ENCODE measurements at regions of chr16 and their contacts with region 1.

Region 1: GRCh38 chr16:67561824-67562525 is 351 bp upstream of the CTCF start:
- DNase-seq: peak; percentile 99
- ATAC-seq: peak; percentile 87
- H3K4me3 Mint-ChIP-seq: peak overlapping the region; percentile 84
- H3K27ac Mint-ChIP-seq: peak overlapping the region; percentile 85
- H3K4me1 Mint-ChIP-seq: peaks cover 41% of the 10 kb centered on the region
- H3K27me3 Mint-ChIP-seq: no peaks in the 10 kb centered on the region

Region 2: DNA sequence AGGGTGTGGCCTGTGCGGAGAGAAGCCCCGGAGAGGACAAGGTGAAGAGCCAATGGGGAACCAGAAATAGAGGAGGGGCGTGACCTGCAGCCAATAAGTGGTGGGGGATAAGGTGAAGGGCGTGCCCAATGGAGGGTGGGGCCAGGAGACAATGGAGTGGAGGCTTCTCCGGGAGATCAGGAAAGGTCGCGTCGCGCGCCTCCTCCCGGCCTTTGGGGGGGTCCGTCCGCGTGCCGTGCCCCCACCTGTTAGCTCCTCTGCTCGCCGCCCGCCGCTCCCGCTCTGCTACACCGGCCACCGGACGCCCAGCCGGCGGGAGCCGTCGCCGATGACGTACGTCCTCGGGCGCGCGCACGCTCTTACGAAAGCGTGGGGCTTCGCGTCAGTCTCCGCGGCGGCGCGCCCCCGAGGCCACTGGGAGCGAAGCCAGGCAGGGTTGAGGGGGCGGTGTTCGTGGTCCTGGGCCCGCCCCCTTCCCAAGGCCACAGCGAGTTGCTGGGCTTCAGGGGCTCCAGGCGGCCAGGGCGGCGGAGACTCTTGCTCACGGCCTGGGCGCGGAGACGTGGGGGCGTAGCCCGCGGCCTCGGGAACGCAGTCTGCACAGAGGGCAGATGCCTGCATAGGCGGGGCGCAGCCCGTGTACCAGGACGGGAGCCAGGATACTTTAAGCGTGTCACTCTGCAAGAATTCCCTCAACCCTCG is 378.2 kb before region 1 on chr16 and contains the start of gene MATCAP1:
- CTCF ChIA-PET with region 1: no interaction called
- POLR2A ChIA-PET with region 1: no interaction called
- intact Hi-C with region 1: loop called in 1 of 2 experiments (anchors 2 kb)
- DNase-seq: peak; percentile 96
- ATAC-seq: peak; percentile 97
- H3K4me3 Mint-ChIP-seq: no peak within 1 kb of the TSS
- H3K27ac Mint-ChIP-seq: no peak within 1 kb of the TSS
- H3K4me1 Mint-ChIP-seq: peaks cover 15% of the 10 kb centered on the region
- H3K27me3 Mint-ChIP-seq: peaks cover 9% of the 10 kb centered on the region
- total RNA-seq, gene MATCAP1: 28.8 to 30.4 TPM

Region 3: DNA sequence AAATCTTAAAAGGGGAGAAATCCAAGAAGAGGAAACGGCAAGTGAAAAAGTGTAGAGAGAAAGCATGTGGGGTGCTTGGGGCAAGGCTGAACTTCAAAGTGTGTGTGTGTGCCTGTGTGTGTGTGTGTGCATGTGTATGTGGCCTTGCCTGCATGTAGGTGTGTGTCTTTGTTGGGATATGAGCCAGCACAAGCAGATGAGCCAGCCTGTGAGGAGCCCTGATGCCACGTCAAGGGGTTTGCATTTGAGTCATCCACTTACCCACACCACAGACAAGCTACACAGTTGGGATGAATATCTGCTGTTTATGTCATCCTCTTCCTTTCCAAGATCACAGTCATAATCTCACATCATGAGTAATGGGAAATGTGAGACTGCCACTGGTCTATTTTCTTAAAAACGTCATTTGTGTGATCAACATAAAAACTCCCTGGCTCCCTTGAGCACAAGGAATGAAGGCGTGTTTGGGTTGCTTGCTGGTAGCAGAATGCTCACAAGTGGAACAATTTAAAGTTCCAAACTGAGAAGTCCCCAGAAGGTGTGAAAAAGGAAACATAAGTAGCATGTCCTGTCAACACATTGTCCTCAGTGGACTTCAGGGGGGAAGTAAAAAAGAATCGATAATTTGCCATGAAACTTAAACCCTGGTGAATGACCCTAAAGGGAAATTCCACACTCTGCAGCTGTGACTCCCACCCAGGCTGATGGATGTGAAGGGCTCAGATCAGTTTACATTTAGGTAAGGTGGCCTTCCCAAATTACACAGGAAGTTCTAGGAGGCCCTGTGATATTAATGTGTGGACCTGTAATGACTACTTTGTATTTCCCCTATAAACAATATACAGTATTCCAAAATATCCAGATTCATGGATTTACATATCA is 250.1 kb before region 1 on chr16:
- CTCF ChIA-PET with region 1: no interaction called
- POLR2A ChIA-PET with region 1: no interaction called
- intact Hi-C with region 1: loop called in 1 of 2 experiments (anchors 1 kb)
- DNase-seq: peak; percentile 94
- ATAC-seq: peak; percentile 98
- H3K4me3 Mint-ChIP-seq: peak overlapping the region; percentile 1
- H3K27ac Mint-ChIP-seq: peak overlapping the region; percentile 98
- H3K4me1 Mint-ChIP-seq: peaks cover 40% of the 10 kb centered on the region
- H3K27me3 Mint-ChIP-seq: peaks cover 1% of the 10 kb centered on the region

Region 4: GRCh38 chr16:67456391-67457081 is 105.4 kb before region 1 on chr16:
- CTCF ChIA-PET with region 1: no interaction called
- POLR2A ChIA-PET with region 1: no interaction called
- intact Hi-C with region 1: no loop called
- DNase-seq: peak; percentile 17
- ATAC-seq: no peak
- H3K4me3 Mint-ChIP-seq: no peak overlapping the region
- H3K27ac Mint-ChIP-seq: no peak overlapping the region
- H3K4me1 Mint-ChIP-seq: peaks cover 8% of the 10 kb centered on the region
- H3K27me3 Mint-ChIP-seq: no peaks in the 10 kb centered on the region

Region 5: DNA sequence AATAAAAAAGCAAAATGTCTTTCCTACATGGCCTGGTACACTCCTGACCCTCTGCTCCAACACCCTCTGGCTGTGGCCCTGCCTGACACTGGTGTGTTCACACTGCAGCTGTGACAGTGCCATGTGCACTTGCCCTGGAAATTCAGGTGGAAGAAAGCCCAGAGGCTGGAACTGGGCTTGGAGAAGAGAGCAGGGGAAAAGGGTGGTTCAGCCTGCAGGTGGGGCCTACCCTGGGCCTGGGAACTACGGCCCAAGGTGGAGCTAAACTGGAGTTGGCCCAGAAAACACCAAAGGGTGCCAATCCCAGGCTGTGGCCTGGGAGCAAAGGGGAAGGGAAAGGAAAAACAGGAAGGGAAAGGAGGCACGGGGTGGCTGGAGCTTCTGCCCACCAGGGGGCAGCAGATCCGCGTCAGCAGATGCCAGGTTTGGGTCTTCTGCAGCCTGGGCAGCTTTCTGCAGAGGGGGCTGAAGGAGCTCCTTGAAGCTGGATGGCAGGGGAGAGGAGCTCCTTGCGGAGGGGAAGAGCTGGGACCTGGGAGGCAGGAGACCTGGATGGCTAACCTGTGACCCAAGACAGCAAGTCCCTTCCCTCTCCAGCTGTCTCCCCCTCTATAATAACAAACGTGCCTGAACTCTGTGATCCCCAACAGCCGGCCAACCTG is 15.1 kb before region 1 on chr16:
- CTCF ChIA-PET with region 1: interaction called, 83 read pairs
- POLR2A ChIA-PET with region 1: interaction called, 17 read pairs
- intact Hi-C with region 1: loop called (anchors 1 to 2 kb)
- DNase-seq: peak; percentile 86
- ATAC-seq: peak; percentile 63
- H3K4me3 Mint-ChIP-seq: no peak overlapping the region
- H3K27ac Mint-ChIP-seq: peak overlapping the region; percentile 89
- H3K4me1 Mint-ChIP-seq: peaks cover 35% of the 10 kb centered on the region
- H3K27me3 Mint-ChIP-seq: no peaks in the 10 kb centered on the region

Region 6: DNA sequence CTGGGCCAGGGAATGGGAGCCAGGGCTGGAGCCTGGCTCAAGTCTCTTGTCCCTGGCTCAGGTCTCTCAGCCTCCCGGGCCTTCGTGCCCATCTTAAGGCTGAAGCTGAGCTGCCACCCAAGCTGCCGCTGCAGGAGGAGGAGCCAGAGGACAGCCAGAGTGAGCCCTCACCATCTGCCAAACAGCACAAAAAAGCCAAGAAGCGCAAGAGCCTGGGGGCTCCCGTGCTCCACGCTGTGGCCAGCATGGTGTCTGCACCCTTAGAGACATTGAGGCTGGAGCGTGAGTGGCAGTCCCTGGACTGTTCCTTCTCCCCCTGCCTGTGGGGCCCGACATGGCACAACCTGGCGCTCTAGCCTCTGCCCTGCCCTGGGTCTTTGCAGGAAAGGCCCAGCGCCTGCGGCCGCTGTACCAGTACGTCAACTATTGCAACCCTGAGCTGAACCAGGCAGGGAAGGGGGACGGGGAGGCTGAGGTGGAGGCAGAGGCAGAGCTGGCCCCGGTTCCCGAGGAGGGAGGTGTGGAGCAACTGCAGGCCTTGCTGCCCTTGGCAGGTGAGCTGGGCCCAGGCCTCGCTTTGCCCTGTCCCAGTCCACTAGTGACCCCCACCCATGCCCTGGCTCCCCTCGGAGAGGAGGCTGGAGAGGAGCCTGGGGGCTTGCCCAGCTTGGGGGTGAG is 106.0 kb after region 1 on chr16:
- CTCF ChIA-PET with region 1: interaction called, 19 read pairs
- POLR2A ChIA-PET with region 1: interaction called, 4 read pairs
- intact Hi-C with region 1: loop called in 1 of 2 experiments (anchors 1 kb)
- DNase-seq: peak; percentile 92
- ATAC-seq: peak; percentile 91
- H3K4me3 Mint-ChIP-seq: no peak overlapping the region
- H3K27ac Mint-ChIP-seq: no peak overlapping the region
- H3K4me1 Mint-ChIP-seq: peaks cover 19% of the 10 kb centered on the region
- H3K27me3 Mint-ChIP-seq: no peaks in the 10 kb centered on the region

Region 7: DNA sequence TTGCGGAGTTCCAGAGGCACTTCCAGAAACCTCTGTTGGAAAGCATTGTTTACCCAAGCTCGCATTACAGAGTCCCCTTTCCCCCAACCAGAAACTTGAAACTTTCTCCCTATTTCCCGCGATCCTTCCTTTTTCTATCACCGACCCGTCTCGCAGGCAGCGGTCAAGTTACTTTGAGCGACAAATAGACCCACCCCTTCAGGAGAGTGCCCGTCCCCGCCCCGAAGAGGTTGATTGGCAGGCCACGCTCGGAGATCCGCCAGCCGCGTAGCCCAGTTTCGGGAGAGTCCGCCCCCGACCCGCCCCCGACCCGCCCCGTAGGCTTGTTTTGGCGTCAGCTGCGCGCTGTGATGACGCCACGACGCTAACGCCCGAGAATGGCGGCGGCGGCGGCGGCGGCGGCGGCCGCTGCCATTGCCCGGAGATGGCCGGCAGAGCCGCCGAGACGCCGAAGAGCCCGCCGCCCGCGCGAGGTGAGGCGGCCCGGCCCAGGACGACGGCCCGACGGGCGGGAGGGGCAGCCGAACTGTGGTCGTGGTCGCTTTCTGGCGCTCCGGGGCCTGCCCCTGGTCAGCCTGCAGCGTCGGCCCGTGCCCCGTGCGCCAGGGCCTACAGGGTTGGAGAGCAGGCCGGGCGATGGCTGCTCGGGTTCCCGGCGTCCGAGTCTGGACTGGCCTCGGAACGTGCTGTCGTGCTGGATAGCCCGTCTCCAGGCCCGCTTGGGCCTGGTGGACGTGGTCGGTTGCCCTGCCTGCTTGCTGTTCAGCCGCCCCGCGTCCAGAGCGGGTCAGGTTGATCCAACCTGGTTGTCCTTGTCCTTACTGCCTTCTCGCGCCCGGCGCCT is 331.1 kb after region 1 on chr16 and contains the start of gene PSKH1:
- CTCF ChIA-PET with region 1: no interaction called
- POLR2A ChIA-PET with region 1: no interaction called
- intact Hi-C with region 1: loop called in 1 of 2 experiments (anchors 1 kb)
- DNase-seq: peak; percentile 97
- ATAC-seq: peak; percentile 99
- H3K4me3 Mint-ChIP-seq: peak within 1 kb of the TSS; percentile 92
- H3K27ac Mint-ChIP-seq: peak within 1 kb of the TSS; percentile 92
- H3K4me1 Mint-ChIP-seq: peaks cover 30% of the 10 kb centered on the region
- H3K27me3 Mint-ChIP-seq: no peaks in the 10 kb centered on the region
- total RNA-seq, gene PSKH1: 11.7 to 11.9 TPM

Region 8: DNA sequence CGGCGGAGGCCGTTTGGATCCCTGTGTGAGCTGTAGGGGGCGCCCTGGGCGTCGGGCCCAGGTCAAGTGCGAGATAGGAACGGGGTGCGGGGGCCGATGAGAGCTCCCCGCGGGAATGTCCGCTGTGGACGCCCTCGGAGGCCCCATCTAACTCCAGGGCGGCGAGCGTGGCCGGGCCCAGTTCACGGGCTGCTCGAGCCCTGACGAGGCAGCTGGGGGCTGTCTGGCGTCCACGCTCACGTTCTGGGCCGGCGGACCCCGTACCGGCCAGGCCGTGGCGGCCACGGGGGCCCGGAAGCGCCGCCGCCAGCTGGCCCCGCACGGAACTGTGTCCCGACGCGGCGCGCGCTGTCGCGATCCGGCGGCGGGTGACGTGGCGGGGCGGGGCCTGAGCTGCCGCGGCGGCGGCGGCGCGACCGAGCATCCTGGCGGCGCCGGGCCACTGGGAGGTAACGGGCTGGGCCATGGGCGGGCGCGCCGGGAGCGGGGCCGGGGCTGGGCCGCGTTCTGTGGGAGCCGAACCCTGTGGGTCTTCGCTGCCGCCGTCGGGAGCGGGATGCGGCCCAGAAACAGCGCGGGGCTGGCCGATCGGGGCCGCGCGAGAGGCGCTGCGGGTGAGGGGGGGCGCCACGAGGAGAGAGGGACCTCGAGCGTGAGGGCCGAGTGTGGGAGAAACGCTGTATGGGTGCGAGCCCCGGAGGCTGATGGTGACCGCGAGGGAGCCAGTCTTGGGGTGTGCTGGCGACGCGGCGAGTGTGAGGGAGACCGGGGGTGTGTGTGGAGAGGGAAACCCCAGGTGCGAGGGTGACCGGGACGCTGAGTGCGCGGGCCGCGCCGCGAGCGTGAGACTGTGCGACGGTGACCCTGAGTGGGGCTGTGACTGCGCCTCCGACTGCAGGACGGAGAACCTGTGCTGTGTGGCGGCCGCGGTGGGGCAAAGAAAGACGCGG is 702.4 kb after region 1 on chr16 and contains the start of gene SLC7A6:
- CTCF ChIA-PET with region 1: interaction called, 3 read pairs
- POLR2A ChIA-PET with region 1: no interaction called
- intact Hi-C with region 1: loop called in 1 of 2 experiments (anchors 1 kb)
- DNase-seq: peak; percentile 92
- ATAC-seq: peak; percentile 69
- H3K4me3 Mint-ChIP-seq: peak within 1 kb of the TSS; percentile 91
- H3K27ac Mint-ChIP-seq: peak within 1 kb of the TSS; percentile 97
- H3K4me1 Mint-ChIP-seq: peaks cover 43% of the 10 kb centered on the region
- H3K27me3 Mint-ChIP-seq: no peaks in the 10 kb centered on the region
- total RNA-seq, gene SLC7A6: 55.7 to 58.7 TPM